Transverse colon (tissue), 4 donors: ENCODE measurements at regions of chr7 and their contacts with region 1.

Region 1: GRCh38 chr7:98617051-98617959 is at the start of gene NPTX2:
- DNase-seq: peak; percentile 18
- H3K4me3 ChIP-seq: peak within 1 kb of the TSS in 3 of 4 donors; percentile 18 to 41 (median 35)
- H3K27ac ChIP-seq: peak within 1 kb of the TSS in 1 of 4 donors; percentile 2
- H3K4me1 ChIP-seq: peaks cover 0 to 22% (median 16%) of the 10 kb centered on the region in 4 donors
- H3K27me3 ChIP-seq: peaks cover 82% of the 10 kb centered on the region
- CTCF ChIP-seq: peak in 2 of 5 experiments; percentile 12 to 15
- EP300 ChIP-seq: no peak
- POLR2A ChIP-seq: no peak
- total RNA-seq, gene NPTX2: 3.4 to 11.5 (median 6.3) TPM

Region 2: GRCh38 chr7:98000356-98000755 is 616.9 kb before region 1 on chr7:
- in situ Hi-C with region 1: no loop called
- intact Hi-C with region 1: no loop called
- DNase-seq: no peak
- H3K4me3 ChIP-seq: no peak overlapping the region
- H3K27ac ChIP-seq: no peak overlapping the region
- H3K4me1 ChIP-seq: no peaks in the 10 kb centered on the region
- H3K27me3 ChIP-seq: peaks cover 13% of the 10 kb centered on the region
- CTCF ChIP-seq: no peak
- EP300 ChIP-seq: no peak
- POLR2A ChIP-seq: no peak

Region 3: DNA sequence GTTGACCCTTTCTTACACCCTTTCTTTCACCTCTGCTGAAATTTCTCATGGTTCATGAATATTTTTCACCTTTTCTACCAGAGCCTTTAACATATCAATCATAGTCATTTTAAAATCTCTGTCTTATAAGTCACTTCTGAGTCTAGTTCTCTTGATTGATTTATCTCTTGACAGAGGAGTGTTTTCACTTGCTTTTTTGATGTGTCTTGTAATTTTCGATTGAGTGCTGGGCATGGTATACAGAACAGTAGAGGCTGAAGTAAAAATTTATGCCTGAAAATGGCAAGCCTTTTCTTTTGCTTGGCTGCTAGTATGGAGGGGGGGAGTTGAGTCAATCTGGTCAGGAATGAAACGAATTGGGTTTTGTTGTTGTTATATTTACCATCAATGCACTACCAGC is 41.4 kb before region 1 on chr7:
- in situ Hi-C with region 1: no loop called
- intact Hi-C with region 1: loop called (anchors 1 kb)
- DNase-seq: no peak
- H3K4me3 ChIP-seq: no peak overlapping the region
- H3K27ac ChIP-seq: no peak overlapping the region
- H3K4me1 ChIP-seq: no peaks in the 10 kb centered on the region
- H3K27me3 ChIP-seq: peaks cover 6% of the 10 kb centered on the region
- CTCF ChIP-seq: no peak
- EP300 ChIP-seq: no peak
- POLR2A ChIP-seq: no peak